Natural killer cell (primary cell): ENCODE measurements at regions of chr2 and their contacts with region 1.

Region 1: GRCh38 chr2:238404406-238405216 is 22.1 kb upstream of the ASB1 start:
- DNase-seq: no peak
- ATAC-seq: no peak
- H3K4me3 ChIP-seq: no peak overlapping the region
- H3K4me3 Mint-ChIP-seq: no peak overlapping the region
- H3K27ac ChIP-seq: peak overlapping the region; percentile 89
- H3K27ac Mint-ChIP-seq: peak overlapping the region; percentile 96 to 98
- H3K4me1 ChIP-seq: peaks cover 29% of the 10 kb centered on the region
- H3K4me1 Mint-ChIP-seq: peaks cover 13 to 31% of the 10 kb centered on the region in 2 donors
- H3K27me3 ChIP-seq: no peaks in the 10 kb centered on the region
- H3K27me3 Mint-ChIP-seq: no peaks in the 10 kb centered on the region
- CTCF ChIP-seq: no peak

Region 2: DNA sequence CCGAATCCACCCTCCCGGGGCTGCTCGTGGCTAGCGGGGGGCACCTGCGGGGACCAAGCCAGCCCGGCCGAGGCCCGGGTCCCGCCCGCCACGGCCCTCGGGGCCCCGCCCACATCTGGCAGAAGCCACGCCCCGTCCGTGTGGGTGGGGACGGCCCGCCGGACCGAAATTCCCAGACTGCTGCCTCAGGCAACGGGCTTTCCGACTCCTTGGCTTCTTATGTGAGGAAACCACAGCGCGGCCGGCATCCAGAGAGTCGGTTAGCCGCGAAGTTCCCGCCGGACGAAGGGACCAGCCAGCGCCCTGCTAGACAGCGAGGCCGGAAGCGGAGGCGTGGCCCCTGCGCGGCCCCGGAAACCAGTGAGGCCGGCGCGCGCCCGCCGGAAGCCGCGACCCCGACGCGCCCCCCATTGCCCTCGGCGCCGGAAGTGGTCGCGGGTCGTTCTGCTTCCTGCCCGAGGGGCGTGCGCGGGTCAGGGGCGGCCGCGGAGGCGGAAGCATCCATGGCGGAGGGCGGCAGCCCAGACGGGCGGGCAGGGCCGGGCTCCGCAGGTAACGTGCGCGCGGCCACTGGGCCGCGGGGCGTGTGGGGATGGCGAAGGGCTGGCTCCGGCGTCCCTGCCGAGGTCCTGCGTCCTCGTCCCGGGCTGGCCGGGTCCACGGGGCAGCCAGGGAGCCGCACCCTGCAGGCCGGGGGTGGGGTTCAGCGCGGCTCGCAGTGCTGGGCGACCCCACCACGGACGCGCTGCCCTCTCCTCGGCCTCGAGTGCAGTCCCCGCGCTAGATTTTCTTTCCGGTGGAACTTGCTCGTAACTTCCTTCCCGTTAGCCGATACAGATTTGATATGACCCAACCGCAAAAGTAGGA is 22.2 kb after region 1 on chr2 and contains the start of gene ASB1:
- intact Hi-C with region 1: loop called (anchors 2 kb)
- DNase-seq: peak; percentile 83 to 86
- ATAC-seq: peak; percentile 82 to 88 (median 85)
- H3K4me3 ChIP-seq: peak within 1 kb of the TSS; percentile 55
- H3K4me3 Mint-ChIP-seq: peak within 1 kb of the TSS; percentile 89
- H3K27ac ChIP-seq: peak within 1 kb of the TSS; percentile 92
- H3K27ac Mint-ChIP-seq: peak within 1 kb of the TSS; percentile 90 to 91
- H3K4me1 ChIP-seq: peaks cover 28% of the 10 kb centered on the region
- H3K4me1 Mint-ChIP-seq: peaks cover 42 to 55% of the 10 kb centered on the region in 2 donors
- H3K27me3 ChIP-seq: no peaks in the 10 kb centered on the region
- H3K27me3 Mint-ChIP-seq: no peaks in the 10 kb centered on the region
- CTCF ChIP-seq: no peak
- total RNA-seq, gene ASB1: 38.3 to 47.5 (median 38.9) TPM